PC-3 (cell line): ENCODE measurements at regions of chr2 and their contacts with region 1.

Region 1: DNA sequence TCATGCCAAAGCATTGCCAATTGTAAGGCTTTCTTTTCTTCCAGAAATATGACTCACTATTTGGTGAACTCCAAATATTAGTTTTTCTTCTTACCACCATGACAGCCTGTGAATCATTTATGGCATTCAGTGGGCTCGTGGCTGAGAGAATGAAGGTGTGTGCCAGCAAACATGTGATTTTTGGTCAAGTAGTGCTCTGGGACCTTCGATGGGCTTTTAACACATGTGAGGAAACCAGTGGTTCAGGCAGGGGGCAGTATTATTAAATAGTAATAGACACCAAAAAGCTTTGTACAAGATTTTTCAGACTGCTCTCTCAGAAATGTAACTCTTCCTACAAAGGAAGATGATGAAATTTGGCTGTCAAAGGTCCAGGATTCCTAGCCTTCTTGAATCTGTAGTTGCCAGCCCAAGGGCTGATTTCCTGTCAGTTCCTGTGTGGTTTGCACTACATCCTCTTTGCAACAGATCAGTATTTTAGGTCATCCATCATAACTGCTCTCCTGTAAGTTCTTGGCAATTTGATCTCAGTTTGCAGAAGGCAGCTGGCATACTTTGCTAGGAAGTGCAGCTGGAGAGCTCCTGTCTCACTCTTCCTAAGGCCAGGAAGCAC is 64.3 kb downstream of the BABAM2 start:
- DNase-seq: peak; percentile 94
- ATAC-seq: peak; percentile 80
- H3K4me3 ChIP-seq: peak overlapping the region; percentile 49; the same call in 1 of the 2 replicates
- H3K27ac ChIP-seq: peak overlapping the region; percentile 93
- H3K4me1 ChIP-seq: peaks cover 68% of the 10 kb centered on the region
- H3K27me3 ChIP-seq: no peaks in the 10 kb centered on the region
- CTCF ChIP-seq: peak; percentile 47

Region 2: GRCh38 chr2:27754138-27754588 is 200.7 kb before region 1 on chr2:
- CTCF ChIA-PET with region 1: no interaction called
- POLR2A ChIA-PET with region 1: no interaction called
- intact Hi-C with region 1: loop called (anchors 5 kb)
- DNase-seq: peak; percentile 89
- ATAC-seq: peak; percentile 99
- H3K4me3 ChIP-seq: no peak overlapping the region
- H3K27ac ChIP-seq: no peak overlapping the region
- H3K4me1 ChIP-seq: peaks cover 10% of the 10 kb centered on the region; the same call in 1 of the 2 replicates
- H3K27me3 ChIP-seq: no peaks in the 10 kb centered on the region
- CTCF ChIP-seq: peak; percentile 98

Region 3: DNA sequence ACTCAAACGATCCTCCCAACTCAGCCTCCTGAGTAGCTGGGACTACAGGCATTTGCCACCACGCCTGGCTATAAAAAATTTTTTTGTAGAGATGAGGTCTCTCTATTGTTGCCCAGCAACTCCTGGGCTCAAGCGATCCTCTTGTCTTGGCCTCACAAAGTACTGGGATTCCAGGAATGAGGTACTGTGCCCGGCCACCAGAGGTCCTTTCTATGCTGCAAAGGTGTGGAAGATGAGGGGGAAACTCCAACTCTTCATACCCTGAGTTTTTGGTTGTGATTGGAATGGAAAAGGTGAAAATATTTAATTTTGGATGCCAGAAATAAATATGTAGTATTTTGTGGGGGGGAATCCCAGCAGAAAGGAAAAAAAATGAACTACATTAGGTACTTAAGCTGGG is 147.4 kb before region 1 on chr2:
- CTCF ChIA-PET with region 1: no interaction called
- POLR2A ChIA-PET with region 1: interaction called, 3 read pairs
- intact Hi-C with region 1: loop called (anchors 1 kb)
- DNase-seq: peak; percentile 57
- ATAC-seq: peak; percentile 25; the same call in 1 of the 2 replicates
- H3K4me3 ChIP-seq: no peak overlapping the region
- H3K27ac ChIP-seq: no peak overlapping the region
- H3K4me1 ChIP-seq: peaks cover 28% of the 10 kb centered on the region
- H3K27me3 ChIP-seq: no peaks in the 10 kb centered on the region
- CTCF ChIP-seq: peak; percentile 79

Region 4: DNA sequence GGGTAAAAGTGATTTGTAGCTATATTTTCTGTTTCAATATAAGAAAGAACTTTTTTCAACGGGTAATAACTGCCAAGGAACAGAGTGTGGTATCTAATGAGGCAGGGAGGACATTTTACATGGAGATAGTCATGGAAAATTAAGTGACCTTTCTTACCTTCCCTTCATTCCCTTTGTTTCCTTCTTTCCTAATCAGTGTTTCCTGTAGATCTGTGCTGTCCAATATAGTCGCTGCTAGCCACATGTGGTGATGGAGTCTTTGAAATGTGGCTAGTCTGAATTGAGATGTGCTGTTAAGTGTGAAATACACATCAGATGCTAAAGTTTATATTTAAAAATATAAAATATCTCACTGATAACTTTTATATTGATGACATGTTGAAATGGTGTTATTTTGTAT is 17.4 kb after region 1 on chr2:
- CTCF ChIA-PET with region 1: no interaction called
- POLR2A ChIA-PET with region 1: interaction called, 12 read pairs
- intact Hi-C with region 1: no loop called
- DNase-seq: no peak
- ATAC-seq: no peak
- H3K4me3 ChIP-seq: no peak overlapping the region
- H3K27ac ChIP-seq: no peak overlapping the region
- H3K4me1 ChIP-seq: peaks cover 8% of the 10 kb centered on the region
- H3K27me3 ChIP-seq: no peaks in the 10 kb centered on the region
- CTCF ChIP-seq: no peak

Region 5: GRCh38 chr2:28009732-28010131 is 54.9 kb after region 1 on chr2:
- CTCF ChIA-PET with region 1: no interaction called
- POLR2A ChIA-PET with region 1: no interaction called
- intact Hi-C with region 1: no loop called
- DNase-seq: peak; percentile 37
- ATAC-seq: no peak
- H3K4me3 ChIP-seq: no peak overlapping the region
- H3K27ac ChIP-seq: no peak overlapping the region
- H3K4me1 ChIP-seq: peaks cover under 1% of the 10 kb centered on the region; the same call in 1 of the 2 replicates
- H3K27me3 ChIP-seq: no peaks in the 10 kb centered on the region
- CTCF ChIP-seq: no peak

Region 6: DNA sequence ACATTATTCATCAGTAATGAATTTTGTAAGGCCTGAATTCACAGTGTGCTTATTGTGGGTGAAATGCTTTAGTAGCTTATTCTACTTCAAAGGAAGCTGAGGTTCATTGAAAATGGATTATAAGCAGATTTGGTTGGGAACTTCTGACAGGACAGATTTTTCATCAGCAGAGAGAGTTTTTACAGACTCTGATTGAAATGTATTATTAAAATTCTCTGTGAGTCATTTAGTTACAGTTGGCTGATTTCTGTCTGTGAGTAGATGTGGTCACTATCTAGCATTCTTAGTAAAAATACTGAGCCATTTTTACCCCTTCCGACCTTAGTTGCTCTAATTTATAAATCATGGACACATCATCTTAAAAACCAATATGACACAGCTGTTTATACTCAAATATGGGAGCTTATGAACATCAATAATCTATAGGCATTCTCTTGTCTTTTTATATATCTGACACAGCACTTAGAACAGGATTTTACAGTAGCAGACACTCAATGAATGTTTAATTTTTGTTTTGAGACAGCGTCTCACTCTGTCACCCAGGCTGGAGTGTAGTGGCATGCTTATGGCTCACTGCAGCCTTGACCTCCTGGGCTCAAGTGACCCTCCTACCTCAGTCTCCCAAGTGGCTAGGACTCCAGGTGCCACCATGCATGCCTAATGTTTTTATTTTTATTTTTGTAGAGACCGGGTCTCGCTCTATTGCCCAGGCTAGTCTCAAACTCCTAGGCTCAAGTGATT is 175.2 kb after region 1 on chr2:
- CTCF ChIA-PET with region 1: no interaction called
- POLR2A ChIA-PET with region 1: no interaction called
- intact Hi-C with region 1: loop called (anchors 2 kb)
- DNase-seq: peak; percentile 42
- ATAC-seq: no peak
- H3K4me3 ChIP-seq: no peak overlapping the region
- H3K27ac ChIP-seq: no peak overlapping the region; the same call in 1 of the 2 replicates
- H3K4me1 ChIP-seq: peaks cover 33% of the 10 kb centered on the region
- H3K27me3 ChIP-seq: no peaks in the 10 kb centered on the region
- CTCF ChIP-seq: no peak

Region 7: DNA sequence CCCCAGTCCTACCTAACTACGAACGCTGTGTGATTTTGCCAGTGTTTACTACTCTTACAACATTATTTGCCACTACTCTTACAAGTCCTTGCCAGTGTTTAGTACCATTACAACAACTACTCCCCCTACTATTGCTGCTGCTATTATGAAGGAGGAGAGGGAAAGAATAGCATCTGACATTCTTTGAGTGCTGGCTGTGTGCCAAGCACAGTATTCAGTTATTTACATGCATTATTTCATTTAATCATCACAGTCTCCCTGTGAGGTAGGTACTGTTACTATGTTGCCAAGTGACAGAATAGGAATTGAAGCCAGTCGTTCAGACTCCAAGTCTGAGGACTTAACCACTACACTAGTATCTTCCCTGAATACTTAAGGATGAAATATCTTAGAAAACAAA is 251.9 kb after region 1 on chr2:
- CTCF ChIA-PET with region 1: no interaction called
- POLR2A ChIA-PET with region 1: no interaction called
- intact Hi-C with region 1: no loop called
- DNase-seq: no peak
- ATAC-seq: no peak
- H3K4me3 ChIP-seq: no peak overlapping the region
- H3K27ac ChIP-seq: no peak overlapping the region
- H3K4me1 ChIP-seq: no peaks in the 10 kb centered on the region
- H3K27me3 ChIP-seq: no peaks in the 10 kb centered on the region
- CTCF ChIP-seq: no peak

Region 8: DNA sequence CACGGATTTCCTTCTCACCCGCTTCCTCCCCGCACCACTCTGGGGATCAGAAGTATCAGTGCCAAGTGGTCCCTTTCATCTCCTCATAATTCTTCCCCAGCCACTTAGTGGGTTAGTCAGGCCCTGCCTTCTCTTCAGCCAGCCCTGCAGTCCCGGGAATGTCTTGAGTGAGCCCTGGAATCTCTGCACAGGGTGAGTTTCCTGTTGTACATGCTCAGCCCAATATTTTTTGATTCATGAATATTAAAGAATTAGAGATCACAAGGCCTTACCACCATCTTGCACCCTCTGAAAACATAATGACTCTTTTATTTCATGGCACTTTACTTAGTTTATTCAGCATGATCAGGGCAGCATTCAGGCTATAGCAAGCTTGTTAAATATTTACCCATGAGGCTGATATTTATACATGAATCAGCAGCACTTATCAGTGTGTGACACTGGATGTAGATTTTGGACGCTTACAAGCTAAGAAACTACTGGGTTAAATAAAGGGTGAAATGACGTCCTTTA is 278.3 kb after region 1 on chr2:
- CTCF ChIA-PET with region 1: no interaction called
- POLR2A ChIA-PET with region 1: no interaction called
- intact Hi-C with region 1: loop called (anchors 5 kb)
- DNase-seq: peak; percentile 44
- ATAC-seq: peak; percentile 84
- H3K4me3 ChIP-seq: no peak overlapping the region
- H3K27ac ChIP-seq: peak overlapping the region; percentile 52
- H3K4me1 ChIP-seq: peaks cover 16% of the 10 kb centered on the region
- H3K27me3 ChIP-seq: no peaks in the 10 kb centered on the region
- CTCF ChIP-seq: no peak

Region 9: DNA sequence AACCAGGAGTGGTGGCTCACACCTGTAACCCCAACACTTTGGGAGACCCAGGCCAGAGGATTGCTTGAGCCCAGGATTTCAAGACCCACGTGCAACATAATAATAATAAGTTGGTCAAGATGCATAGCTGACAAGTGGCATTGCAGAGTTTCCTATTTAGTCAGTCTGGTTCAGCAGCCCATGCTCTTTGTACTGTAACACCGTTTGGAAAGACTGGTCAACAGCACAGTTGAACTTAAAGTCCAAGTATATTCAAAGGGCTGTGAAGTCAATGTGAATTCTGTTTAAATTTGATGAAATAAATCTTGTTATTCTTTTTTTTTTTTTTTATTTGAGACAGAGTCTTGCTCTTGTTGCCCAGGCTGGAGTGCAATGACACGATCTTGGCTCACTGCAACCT is 916.7 kb after region 1 on chr2:
- CTCF ChIA-PET with region 1: no interaction called
- POLR2A ChIA-PET with region 1: no interaction called
- intact Hi-C with region 1: no loop called
- DNase-seq: no peak
- ATAC-seq: no peak
- H3K4me3 ChIP-seq: no peak overlapping the region
- H3K27ac ChIP-seq: no peak overlapping the region
- H3K4me1 ChIP-seq: peaks cover 15% of the 10 kb centered on the region
- H3K27me3 ChIP-seq: peaks cover 7% of the 10 kb centered on the region
- CTCF ChIP-seq: no peak